Sigmoid colon (tissue), 7 donors: ENCODE measurements at regions of chr15 and their contacts with region 1.

Region 1: DNA sequence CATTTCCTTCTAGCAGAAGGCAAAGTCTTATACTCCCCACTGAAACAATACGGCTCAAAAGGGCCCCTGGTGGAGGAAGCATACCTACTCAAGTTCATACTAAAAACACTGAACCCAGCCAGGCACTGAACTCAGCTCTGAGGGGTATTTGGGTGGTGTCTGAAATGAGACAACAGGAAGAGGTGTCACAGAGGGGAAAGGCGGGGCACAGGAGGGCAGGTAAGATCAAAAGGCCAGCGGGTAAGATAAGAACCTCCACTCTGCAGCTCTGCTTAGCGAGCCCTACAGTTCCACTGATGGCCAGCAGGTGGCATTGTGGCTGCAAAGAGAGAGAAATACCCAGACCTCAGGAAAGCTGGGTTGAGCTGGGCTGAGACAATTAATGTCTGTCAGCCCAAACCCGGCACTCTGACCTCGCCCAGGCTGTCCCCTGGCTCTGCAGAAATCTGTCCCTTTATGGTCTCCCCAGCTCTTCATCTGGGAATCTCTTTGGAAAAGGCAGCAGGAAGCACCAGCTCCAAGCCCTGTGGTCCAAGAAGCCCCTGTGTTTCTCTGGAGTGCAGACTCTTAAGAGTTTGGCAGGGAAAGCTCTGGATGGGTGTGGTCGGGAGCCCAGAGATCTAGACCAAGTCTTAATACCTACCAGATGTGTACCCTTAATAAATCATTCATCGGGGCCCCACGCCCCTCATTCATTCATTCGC is 8.4 kb downstream of the MFGE8 start:
- DNase-seq: peak; percentile 83
- H3K4me3 ChIP-seq: no peak overlapping the region
- H3K27ac ChIP-seq: peak overlapping the region in 1 of 4 donors; percentile 33
- H3K4me1 ChIP-seq: peaks cover 0 to 15% (median 7%) of the 10 kb centered on the region in 4 donors
- H3K27me3 ChIP-seq: no peaks in the 10 kb centered on the region
- CTCF ChIP-seq: peak; percentile 80 to 100 (median 92)
- EP300 ChIP-seq: no peak
- POLR2A ChIP-seq: no peak

Region 2: GRCh38 chr15:89017370-89018066 is 112.7 kb after region 1 on chr15:
- intact Hi-C with region 1: loop called (anchors 1 kb)
- DNase-seq: peak; percentile 88
- H3K4me3 ChIP-seq: peak overlapping the region in 3 of 4 donors; percentile 13 to 23 (median 17)
- H3K27ac ChIP-seq: peak overlapping the region; percentile 14 to 86 (median 53)
- H3K4me1 ChIP-seq: peaks cover 0 to 37% (median 15%) of the 10 kb centered on the region in 4 donors
- H3K27me3 ChIP-seq: no peaks in the 10 kb centered on the region
- CTCF ChIP-seq: peak; percentile 41 to 73 (median 66)
- EP300 ChIP-seq: peak in 2 of 4 donors; percentile 20 to 34
- POLR2A ChIP-seq: no peak

Region 3: GRCh38 chr15:89177633-89178306 is 273.0 kb after region 1 on chr15:
- intact Hi-C with region 1: loop called (anchors 2 kb)
- DNase-seq: peak; percentile 78
- H3K4me3 ChIP-seq: no peak overlapping the region
- H3K27ac ChIP-seq: peak overlapping the region in 1 of 4 donors; percentile 20
- H3K4me1 ChIP-seq: peaks cover 0 to 9% (median 7%) of the 10 kb centered on the region in 4 donors
- H3K27me3 ChIP-seq: no peaks in the 10 kb centered on the region
- CTCF ChIP-seq: peak; percentile 49 to 83 (median 76)
- EP300 ChIP-seq: no peak
- POLR2A ChIP-seq: no peak